Activated B cell treated with CpG ODN at 0.5 μM for 24 hours (primary cell): ENCODE measurements at regions of chr17 and their contacts with region 1.

Region 1: DNA sequence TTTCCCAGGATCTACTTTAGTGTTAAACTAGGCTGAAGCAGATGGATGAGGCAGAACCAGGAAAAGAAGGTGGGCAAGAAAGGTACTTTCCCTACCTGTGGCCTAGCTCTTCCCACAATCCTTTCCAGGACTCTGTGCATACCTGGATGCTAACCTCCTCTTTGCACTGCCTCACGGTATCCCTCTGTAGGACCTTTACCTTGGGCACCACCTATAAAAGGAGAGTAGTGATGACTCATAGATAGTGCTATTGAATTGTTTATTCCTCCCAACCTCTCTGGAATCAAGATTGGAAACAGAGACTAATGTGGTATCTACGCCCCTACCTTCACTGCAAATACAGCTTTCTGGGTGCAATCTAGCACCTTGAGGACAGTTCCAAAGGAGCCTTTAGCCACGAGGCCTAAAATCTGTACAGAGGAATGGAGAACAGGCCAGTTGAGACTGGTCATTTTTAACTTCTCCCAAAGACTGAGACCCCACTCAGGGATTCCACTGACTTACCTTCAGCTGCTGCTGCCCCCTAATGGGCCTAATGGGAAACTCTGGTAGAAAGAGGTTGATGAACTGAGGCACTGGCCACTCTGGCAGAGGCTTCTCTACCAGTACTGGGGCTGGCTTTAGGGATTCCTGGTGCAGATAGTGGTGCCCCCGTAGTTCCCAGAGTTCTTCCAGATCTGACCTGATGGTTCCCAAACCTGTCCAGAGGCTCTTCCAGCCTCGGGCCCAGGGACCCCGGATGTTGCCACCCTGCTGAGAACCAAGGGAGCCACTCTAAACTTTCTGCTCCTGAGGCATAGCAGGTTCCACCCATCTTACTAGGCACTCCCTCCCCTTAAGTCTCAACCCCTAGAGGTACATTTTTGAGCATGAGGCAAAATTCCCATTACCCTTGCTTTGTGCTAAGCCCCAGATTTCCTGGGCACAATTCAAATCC is 781 bp downstream of the RSKR start:
- DNase-seq: peak; percentile 26
- ATAC-seq: peak; percentile 54
- H3K4me3 Mint-ChIP-seq: no peak overlapping the region
- H3K27ac Mint-ChIP-seq: peak overlapping the region; percentile 38
- H3K4me1 Mint-ChIP-seq: peaks cover 38% of the 10 kb centered on the region
- H3K27me3 Mint-ChIP-seq: no peaks in the 10 kb centered on the region
- CTCF ChIP-seq: no peak

Region 2: DNA sequence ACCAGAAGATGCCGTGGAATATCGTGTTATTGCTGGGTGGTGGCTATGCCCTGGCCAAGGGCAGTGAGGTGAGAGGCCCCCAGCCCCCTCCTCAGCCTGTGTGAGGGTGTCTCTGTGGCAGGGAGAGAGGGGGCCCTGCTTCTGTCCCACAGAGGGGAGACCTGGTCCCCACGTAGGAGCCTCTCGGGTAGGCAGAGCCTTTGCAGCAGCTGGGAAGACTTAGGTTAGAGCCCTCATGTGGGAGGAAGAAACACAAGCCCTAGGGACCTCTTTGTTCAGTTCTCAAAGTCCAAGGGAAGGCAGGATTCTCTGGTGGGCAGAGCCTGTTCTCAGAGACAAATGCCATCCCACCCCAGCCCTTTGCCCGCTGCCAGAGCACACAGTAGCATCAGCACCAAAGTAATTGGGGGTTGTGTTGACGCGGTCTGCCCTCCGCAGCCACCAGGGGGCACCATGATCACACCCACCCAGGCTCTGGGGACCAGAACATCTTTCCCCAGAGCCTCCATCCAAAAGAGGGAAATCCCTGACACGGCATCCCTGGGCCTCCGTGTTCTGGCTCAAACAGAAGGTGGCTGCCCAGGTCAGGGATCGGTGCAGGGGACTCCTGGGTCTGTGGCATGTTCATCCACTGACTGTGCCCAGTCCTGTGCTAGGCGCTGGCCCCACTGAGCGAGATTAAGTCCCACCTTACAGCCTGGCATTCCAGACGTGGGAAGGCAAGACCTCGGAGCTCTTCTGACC is 118.6 kb before region 1 on chr17:
- CTCF ChIA-PET with region 1: interaction called, 66 read pairs
- POLR2A ChIA-PET with region 1: no interaction called
- intact Hi-C with region 1: loop called (anchors 1 kb)
- DNase-seq: peak; percentile 82
- ATAC-seq: peak; percentile 95
- H3K4me3 Mint-ChIP-seq: no peak overlapping the region
- H3K27ac Mint-ChIP-seq: no peak overlapping the region
- H3K4me1 Mint-ChIP-seq: peaks cover 11% of the 10 kb centered on the region
- H3K27me3 Mint-ChIP-seq: peaks cover 2% of the 10 kb centered on the region
- CTCF ChIP-seq: peak; percentile 63

Region 3: GRCh38 chr17:28500712-28501379 is 112.4 kb before region 1 on chr17:
- CTCF ChIA-PET with region 1: interaction called, 66 read pairs
- POLR2A ChIA-PET with region 1: no interaction called
- intact Hi-C with region 1: no loop called
- DNase-seq: peak; percentile 34
- ATAC-seq: peak; percentile 83
- H3K4me3 Mint-ChIP-seq: peak overlapping the region; percentile 17
- H3K27ac Mint-ChIP-seq: peak overlapping the region; percentile 71
- H3K4me1 Mint-ChIP-seq: peaks cover 24% of the 10 kb centered on the region
- H3K27me3 Mint-ChIP-seq: peaks cover 6% of the 10 kb centered on the region
- CTCF ChIP-seq: no peak

Region 4: DNA sequence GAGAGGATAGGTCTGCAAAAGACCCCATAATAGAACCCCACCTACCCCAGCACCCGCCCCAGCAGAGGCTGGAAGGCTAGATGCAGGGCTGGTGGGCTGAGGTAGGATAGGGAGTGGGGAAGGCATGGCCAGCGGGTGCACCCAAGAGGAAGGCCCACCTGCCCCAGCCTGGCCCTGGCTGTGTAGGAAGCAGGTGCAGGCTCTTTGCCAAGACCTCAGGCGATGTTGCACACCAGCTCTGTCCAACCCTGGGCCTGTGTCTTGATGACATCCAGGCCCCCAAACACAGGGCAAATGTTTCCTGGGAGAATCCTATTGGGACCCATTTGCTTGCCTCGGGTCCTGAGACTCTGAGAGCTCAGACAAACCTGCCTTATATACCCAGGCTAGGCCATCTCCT is 73.0 kb before region 1 on chr17:
- CTCF ChIA-PET with region 1: interaction called, 4 read pairs
- POLR2A ChIA-PET with region 1: interaction called, 6 read pairs
- intact Hi-C with region 1: loop called (anchors 1 kb)
- DNase-seq: no peak
- ATAC-seq: no peak
- H3K4me3 Mint-ChIP-seq: no peak overlapping the region
- H3K27ac Mint-ChIP-seq: no peak overlapping the region
- H3K4me1 Mint-ChIP-seq: peaks cover 22% of the 10 kb centered on the region
- H3K27me3 Mint-ChIP-seq: no peaks in the 10 kb centered on the region
- CTCF ChIP-seq: no peak

Region 5: DNA sequence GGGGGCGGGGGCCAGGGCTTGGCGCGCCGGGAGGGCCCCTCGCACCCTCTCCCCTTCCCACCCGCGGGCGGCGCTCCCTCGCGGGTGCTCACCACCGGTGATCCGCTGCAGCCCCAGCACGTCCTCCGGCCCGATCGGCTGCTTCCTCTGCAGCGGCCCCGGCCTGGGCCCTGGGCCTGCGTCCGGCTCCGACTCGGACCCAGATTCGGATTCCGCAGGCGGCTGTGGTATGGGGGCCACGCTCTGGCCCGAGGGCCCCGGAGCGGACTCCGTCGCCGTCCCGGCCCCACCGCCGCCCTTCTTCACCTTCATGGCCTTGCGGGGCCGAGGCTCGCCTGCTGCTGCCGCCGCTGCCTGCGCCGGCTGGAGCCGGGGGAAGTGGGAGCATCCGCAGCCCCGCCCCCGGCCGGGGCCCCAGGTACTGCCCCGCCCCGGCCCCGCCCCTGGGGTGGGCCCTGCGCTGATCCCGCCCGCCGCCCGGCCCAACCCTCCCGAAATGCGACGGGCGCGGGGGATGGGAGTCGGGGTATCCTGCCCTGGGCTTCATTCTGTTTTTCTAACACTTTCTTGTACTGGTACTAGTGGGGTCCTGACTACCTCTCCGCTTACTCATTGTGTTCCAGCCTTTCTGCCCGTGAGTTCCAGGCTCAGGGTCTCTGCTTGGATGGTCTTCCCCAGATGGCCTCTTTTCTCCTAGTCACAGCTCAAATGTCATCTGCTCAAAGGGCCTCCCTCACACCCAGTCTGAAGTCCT is 60.8 kb before region 1 on chr17 and contains the start of gene UNC119:
- CTCF ChIA-PET with region 1: interaction called, 32 read pairs
- POLR2A ChIA-PET with region 1: interaction called, 5 read pairs
- intact Hi-C with region 1: loop called (anchors 5 kb)
- DNase-seq: peak; percentile 85
- ATAC-seq: peak; percentile 66
- H3K4me3 Mint-ChIP-seq: peak within 1 kb of the TSS; percentile 97
- H3K27ac Mint-ChIP-seq: peak within 1 kb of the TSS; percentile 93
- H3K4me1 Mint-ChIP-seq: peaks cover 65% of the 10 kb centered on the region
- H3K27me3 Mint-ChIP-seq: no peaks in the 10 kb centered on the region
- CTCF ChIP-seq: no peak
- total RNA-seq, gene UNC119: 426 and 437 TPM in 2 replicates

Region 6: DNA sequence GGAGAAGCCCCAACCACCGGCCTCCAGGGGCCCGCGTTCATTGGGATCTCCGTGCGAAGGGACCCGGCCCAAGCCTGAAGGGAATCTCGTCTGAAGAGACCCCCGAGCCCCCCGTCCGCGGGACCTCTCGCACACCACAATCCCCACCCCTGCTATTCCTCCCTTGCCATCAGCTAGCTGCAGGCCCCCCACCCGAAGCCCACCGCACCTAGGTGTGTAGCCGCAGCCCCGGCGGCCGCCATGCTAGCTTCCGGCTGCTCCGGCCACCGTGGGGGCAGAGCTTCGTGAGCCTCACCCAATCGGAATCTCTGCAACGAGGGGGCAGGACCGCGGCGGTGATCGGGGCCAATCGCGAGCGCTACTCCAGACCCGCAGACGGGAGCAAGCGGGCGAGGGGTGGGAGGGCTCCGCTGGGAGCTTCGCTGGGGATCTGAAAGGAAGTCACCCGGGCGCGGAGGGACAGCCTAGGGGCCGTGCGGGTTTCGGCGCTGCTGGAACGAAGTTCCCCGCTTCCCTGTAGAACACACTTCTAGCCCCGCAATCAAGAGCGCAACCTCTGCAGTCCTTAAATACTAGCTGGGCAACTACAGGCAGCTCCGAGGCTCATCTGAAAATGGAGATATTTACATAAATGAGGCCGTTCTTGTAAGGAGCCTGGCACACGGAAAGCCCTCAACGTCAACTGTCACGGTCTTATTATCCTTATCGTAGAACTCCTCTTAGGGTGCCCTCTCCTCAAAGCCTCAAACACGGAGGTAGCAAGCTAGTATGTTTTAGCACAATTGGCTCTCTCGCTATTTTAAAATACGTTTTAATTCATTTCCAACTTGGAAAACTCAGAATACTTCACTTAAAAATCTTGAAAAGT is 41.7 kb before region 1 on chr17 and contains the start of gene PIGS:
- CTCF ChIA-PET with region 1: interaction called, 3 read pairs
- POLR2A ChIA-PET with region 1: interaction called, 5 read pairs
- intact Hi-C with region 1: loop called (anchors 5 kb)
- DNase-seq: peak; percentile 84
- ATAC-seq: peak; percentile 94
- H3K4me3 Mint-ChIP-seq: peak within 1 kb of the TSS; percentile 95
- H3K27ac Mint-ChIP-seq: peak within 1 kb of the TSS; percentile 87
- H3K4me1 Mint-ChIP-seq: peaks cover 62% of the 10 kb centered on the region
- H3K27me3 Mint-ChIP-seq: no peaks in the 10 kb centered on the region
- CTCF ChIP-seq: no peak
- total RNA-seq, gene PIGS: 86.4 and 92.2 TPM in 2 replicates

Region 7: DNA sequence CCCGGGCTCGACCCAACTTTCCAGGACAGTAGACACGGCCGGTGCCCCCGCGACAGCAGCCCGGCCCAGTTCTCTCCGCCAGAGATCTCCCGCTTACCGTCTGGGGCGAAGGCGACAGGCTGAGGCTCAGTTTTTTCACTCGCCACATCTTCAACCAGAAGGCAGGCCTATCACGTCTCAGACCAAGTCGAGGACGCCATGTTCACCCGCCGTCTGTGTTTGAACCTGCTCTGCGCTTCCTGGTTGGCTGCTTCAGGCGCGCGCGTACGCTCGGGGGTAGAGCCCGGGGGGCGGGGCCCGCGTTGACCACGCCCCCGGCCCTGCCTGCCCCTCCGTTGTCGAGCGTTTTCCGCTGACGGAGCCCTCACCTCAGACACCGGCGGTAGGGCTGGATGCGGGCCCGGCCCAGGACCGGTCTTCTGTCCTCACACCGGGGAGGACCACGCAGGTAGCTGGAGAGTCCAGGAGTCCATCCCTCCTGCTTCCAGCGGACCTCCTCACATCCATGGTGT is 14.3 kb before region 1 on chr17 and contains the start of gene SPAG5:
- CTCF ChIA-PET with region 1: interaction called, 9 read pairs
- POLR2A ChIA-PET with region 1: interaction called, 11 read pairs
- intact Hi-C with region 1: no loop called
- DNase-seq: peak; percentile 94
- ATAC-seq: peak; percentile 89
- H3K4me3 Mint-ChIP-seq: peak within 1 kb of the TSS; percentile 87
- H3K27ac Mint-ChIP-seq: peak within 1 kb of the TSS; percentile 96
- H3K4me1 Mint-ChIP-seq: peaks cover 24% of the 10 kb centered on the region
- H3K27me3 Mint-ChIP-seq: no peaks in the 10 kb centered on the region
- CTCF ChIP-seq: no peak
- total RNA-seq, gene SPAG5: 14.6 and 15.8 TPM in 2 replicates